ENCODE measurements at regions of chr14 and their contacts with region 1.

Region 1: DNA sequence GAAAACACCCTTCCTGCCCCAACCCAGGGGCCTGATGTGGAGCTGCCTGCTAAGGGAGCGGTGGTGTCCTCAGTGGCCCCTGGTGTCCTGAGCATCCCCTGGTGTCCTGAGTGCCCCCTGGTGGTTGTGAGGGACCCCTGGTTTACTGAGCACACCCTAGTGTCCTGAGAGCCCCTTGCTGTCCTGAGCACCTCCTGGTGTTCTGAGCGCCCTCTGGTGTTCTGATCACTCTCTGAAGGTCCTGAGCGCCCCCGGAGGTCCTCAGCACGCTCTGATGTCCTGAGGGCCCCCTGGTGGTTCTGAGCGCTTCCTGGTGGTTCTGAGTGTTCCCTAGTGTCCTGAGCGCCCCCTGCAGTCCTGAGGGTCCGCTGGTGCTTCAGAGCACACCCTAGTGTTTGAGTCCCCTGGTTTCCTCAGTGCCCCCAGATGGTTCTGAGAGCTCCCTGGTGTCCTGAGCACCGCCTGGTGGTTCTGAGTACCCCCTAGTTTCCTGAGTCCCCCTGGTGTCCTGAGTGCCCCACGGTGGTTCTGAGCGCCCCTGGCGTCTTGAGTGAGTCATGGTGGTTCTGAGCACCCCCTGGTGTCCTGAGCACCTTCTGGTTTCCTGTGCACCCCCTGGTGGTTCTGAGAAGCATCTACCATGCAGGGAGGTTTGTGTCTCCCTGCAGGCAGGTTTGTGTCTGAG is 1004.2 kb downstream of the TMEM121 start:
- DNase-seq: peak; percentile 64
- ATAC-seq: peak; percentile 87
- H3K4me3 Mint-ChIP-seq: no peak overlapping the region
- H3K27ac Mint-ChIP-seq: no peak overlapping the region
- H3K4me1 Mint-ChIP-seq: no peaks in the 10 kb centered on the region
- H3K27me3 Mint-ChIP-seq: peaks cover 10% of the 10 kb centered on the region

Region 2: GRCh38 chr14:106235356-106236159 is 295.0 kb before region 1 on chr14:
- CTCF ChIA-PET with region 1: no interaction called
- POLR2A ChIA-PET with region 1: no interaction called
- intact Hi-C with region 1: no loop called
- DNase-seq: no peak
- ATAC-seq: no peak
- H3K4me3 Mint-ChIP-seq: no peak overlapping the region
- H3K27ac Mint-ChIP-seq: no peak overlapping the region
- H3K4me1 Mint-ChIP-seq: peaks cover 31% of the 10 kb centered on the region
- H3K27me3 Mint-ChIP-seq: peaks cover 2% of the 10 kb centered on the region

Region 3: DNA sequence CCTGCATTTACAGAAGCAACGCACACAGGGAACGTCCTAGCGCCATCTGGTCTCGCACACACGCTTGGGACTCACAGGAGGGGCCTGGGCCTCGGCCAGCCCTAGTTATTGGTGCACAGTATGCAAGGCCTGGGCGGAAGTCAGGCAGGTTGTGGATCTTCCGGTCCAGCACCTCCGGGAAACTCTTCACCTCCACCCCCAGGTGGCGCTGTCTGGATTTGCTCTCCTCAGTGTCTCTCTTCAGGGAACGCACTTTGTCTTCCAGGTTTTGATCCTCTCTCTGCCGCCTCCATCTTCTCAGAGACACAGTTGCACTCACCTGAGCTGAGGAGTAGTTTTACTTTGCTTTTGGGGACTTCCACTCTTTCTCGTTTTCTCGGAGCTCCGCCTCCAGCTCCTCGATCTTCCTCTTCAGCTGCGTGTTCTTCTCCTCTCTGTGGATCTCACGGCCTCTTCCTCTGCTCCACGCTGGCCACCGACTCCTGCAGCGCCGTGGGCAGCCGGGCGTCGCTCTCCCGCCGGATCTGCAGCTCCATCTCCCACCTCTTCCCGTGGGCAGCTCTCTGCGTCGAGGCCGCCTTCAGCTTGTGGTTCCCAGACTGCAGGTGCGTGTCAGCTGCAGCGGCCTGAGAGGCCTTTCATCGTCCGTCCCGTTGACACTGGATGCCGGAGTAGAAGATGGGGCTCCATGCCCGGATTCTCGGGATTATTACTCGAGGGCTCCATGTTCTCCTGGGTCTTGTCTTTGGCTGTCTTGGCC is 70.4 kb before region 1 on chr14:
- CTCF ChIA-PET with region 1: interaction called, 15 read pairs
- POLR2A ChIA-PET with region 1: no interaction called
- intact Hi-C with region 1: loop called in 1 of 2 experiments (anchors 5 kb)
- DNase-seq: peak; percentile 84
- ATAC-seq: peak; percentile 76
- H3K4me3 Mint-ChIP-seq: no peak overlapping the region
- H3K27ac Mint-ChIP-seq: no peak overlapping the region
- H3K4me1 Mint-ChIP-seq: peaks cover 2% of the 10 kb centered on the region
- H3K27me3 Mint-ChIP-seq: no peaks in the 10 kb centered on the region

Region 4: GRCh38 chr14:106511006-106511799 is 19.4 kb before region 1 on chr14:
- CTCF ChIA-PET with region 1: interaction called, 46 read pairs
- POLR2A ChIA-PET with region 1: no interaction called
- intact Hi-C with region 1: no loop called
- DNase-seq: peak; percentile 69
- ATAC-seq: peak; percentile 53
- H3K4me3 Mint-ChIP-seq: peak overlapping the region; percentile 15
- H3K27ac Mint-ChIP-seq: peak overlapping the region; percentile 51
- H3K4me1 Mint-ChIP-seq: peaks cover 73% of the 10 kb centered on the region
- H3K27me3 Mint-ChIP-seq: no peaks in the 10 kb centered on the region

Region 5: DNA sequence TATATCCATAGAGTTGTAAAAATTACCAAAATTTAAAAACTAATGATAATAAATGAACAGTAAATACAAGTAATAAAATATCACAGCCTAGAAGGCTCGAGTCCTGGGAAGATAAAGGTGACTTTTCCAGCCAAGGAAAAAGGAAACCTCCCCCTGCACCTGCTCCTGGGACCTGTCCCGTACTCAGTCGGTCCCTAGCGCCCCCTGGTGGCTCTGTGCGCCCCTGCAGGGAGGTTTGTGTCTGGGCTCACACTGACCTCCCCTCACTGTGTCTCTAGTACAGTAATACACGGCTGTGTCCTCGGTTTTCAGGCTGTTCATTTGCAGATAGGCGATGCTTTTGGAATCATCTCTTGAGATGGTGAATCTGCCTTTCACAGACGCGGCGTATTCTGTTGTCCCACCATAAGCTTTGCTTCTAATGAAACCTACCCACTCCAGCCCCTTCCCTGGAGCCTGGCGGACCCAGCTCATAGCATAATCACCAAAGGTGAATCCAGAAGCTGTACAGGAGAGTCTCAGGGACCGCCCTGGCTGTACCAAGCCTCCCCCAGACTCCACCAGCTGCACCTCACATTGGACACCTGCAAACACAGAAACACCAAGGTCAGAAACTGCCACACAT is 26.2 kb after region 1 on chr14:
- CTCF ChIA-PET with region 1: interaction called, 22 read pairs
- POLR2A ChIA-PET with region 1: no interaction called
- intact Hi-C with region 1: no loop called
- DNase-seq: peak; percentile 90
- ATAC-seq: peak; percentile 49
- H3K4me3 Mint-ChIP-seq: no peak overlapping the region
- H3K27ac Mint-ChIP-seq: no peak overlapping the region
- H3K4me1 Mint-ChIP-seq: no peaks in the 10 kb centered on the region
- H3K27me3 Mint-ChIP-seq: peaks cover 13% of the 10 kb centered on the region

Measured in activated CD4-positive, alpha-beta T cell treated with anti-CD3 and anti-CD28 coated beads for 36 hours (primary cell).